ENCODE measurements at regions of chr11 and their contacts with region 1.

Region 1: GRCh38 chr11:119262668-119263351 is 54.1 kb downstream of the MCAM start:
- DNase-seq: no peak
- H3K4me3 Mint-ChIP-seq: no peak overlapping the region
- H3K27ac Mint-ChIP-seq: no peak overlapping the region
- H3K4me1 Mint-ChIP-seq: peaks cover 56% of the 10 kb centered on the region
- H3K27me3 Mint-ChIP-seq: no peaks in the 10 kb centered on the region

Region 2: DNA sequence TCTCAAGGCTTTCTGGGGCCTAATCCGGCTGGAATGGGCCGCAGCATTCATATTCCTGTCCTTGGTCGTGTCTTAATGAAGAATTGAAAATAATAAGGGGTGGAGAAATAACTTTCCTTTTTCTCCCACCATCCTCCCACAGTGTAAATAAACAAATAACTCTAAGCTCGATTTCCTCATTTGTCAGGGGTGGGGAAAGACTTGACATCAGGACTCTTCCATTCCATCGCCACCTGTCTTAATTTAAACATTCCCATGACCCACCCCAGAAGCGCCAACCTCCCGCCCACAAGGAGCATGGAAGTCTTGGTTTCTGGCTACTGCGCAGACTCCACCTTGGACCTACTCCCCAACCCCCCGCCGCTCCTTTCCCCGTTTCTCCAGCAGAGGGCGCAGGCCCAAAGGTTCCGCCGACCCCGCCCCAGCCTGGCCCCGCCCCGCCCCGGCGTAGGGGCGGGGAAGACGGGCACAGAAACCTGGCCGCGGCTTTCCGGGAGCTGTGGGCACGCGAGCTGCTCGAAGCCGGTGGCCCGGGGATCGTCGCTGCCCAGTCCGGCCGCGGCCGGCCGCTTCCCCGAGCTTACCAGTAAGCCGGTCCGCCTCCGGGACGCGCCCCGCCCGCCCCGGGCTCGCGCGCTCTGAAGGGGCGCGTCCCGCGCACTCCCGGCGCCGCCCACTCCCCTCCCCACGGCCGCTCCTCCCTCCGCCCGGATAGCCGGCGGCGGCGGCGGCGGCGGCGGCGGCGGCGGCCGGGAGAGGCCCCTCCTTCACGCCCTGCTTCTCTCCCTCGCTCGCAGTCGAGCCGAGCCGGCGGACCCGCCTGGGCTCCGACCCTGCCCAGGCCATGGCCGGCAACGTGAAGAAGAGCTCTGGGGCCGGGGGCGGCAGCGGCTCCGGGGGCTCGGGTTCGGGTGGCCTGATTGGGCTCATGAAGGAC is 57.0 kb before region 1 on chr11 and contains the start of gene CBL:
- CTCF ChIA-PET with region 1: interaction called, 11 read pairs
- POLR2A ChIA-PET with region 1: interaction called, 5 read pairs
- intact Hi-C with region 1: loop called (anchors 2 kb)
- DNase-seq: peak; percentile 98
- H3K4me3 Mint-ChIP-seq: peak within 1 kb of the TSS; percentile 91
- H3K27ac Mint-ChIP-seq: peak within 1 kb of the TSS; percentile 85
- H3K4me1 Mint-ChIP-seq: peaks cover 25% of the 10 kb centered on the region
- H3K27me3 Mint-ChIP-seq: no peaks in the 10 kb centered on the region
- total RNA-seq, gene CBL: 30.8 to 31.2 TPM

Region 3: GRCh38 chr11:119218141-119218878 is 44.5 kb before region 1 on chr11:
- CTCF ChIA-PET with region 1: no interaction called
- POLR2A ChIA-PET with region 1: no interaction called
- intact Hi-C with region 1: loop called (anchors 2 kb)
- DNase-seq: peak; percentile 22
- H3K4me3 Mint-ChIP-seq: no peak overlapping the region
- H3K27ac Mint-ChIP-seq: peak overlapping the region; percentile 23
- H3K4me1 Mint-ChIP-seq: peaks cover 42% of the 10 kb centered on the region
- H3K27me3 Mint-ChIP-seq: no peaks in the 10 kb centered on the region

Region 4: DNA sequence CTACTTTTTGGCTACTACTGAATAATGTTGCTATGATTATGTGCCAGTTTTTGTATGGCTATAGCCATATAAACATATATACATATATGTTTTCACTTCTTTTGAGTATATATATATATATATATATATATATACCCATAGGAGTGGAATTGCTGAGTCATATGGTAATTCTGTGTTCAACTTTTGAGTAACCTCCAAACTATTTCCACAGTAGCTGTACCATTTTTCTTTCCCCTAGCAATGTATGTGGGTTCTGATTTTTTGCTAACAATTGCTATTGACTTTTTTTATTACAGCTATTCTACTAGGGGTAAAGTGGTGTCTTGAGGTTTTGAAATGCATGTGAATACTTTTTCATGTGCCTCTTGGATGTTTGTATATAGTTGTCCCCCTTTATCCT is 26.3 kb before region 1 on chr11:
- CTCF ChIA-PET with region 1: interaction called, 4 read pairs
- POLR2A ChIA-PET with region 1: interaction called, 5 read pairs
- intact Hi-C with region 1: loop called (anchors 1 kb)
- DNase-seq: no peak
- H3K4me3 Mint-ChIP-seq: no peak overlapping the region
- H3K27ac Mint-ChIP-seq: peak overlapping the region; percentile 44
- H3K4me1 Mint-ChIP-seq: peaks cover 49% of the 10 kb centered on the region
- H3K27me3 Mint-ChIP-seq: no peaks in the 10 kb centered on the region

Region 5: GRCh38 chr11:119249671-119250010 is 13.2 kb before region 1 on chr11:
- CTCF ChIA-PET with region 1: interaction called, 4 read pairs
- POLR2A ChIA-PET with region 1: interaction called, 4 read pairs
- intact Hi-C with region 1: loop called (anchors 1 kb)
- DNase-seq: no peak
- H3K4me3 Mint-ChIP-seq: no peak overlapping the region
- H3K27ac Mint-ChIP-seq: no peak overlapping the region
- H3K4me1 Mint-ChIP-seq: peaks cover 53% of the 10 kb centered on the region
- H3K27me3 Mint-ChIP-seq: no peaks in the 10 kb centered on the region

Region 6: GRCh38 chr11:119284344-119285157 is 21.7 kb after region 1 on chr11:
- CTCF ChIA-PET with region 1: interaction called, 13 read pairs
- POLR2A ChIA-PET with region 1: no interaction called
- intact Hi-C with region 1: loop called (anchors 2 kb)
- DNase-seq: no peak
- H3K4me3 Mint-ChIP-seq: no peak overlapping the region
- H3K27ac Mint-ChIP-seq: no peak overlapping the region
- H3K4me1 Mint-ChIP-seq: peaks cover 13% of the 10 kb centered on the region
- H3K27me3 Mint-ChIP-seq: no peaks in the 10 kb centered on the region

Region 7: DNA sequence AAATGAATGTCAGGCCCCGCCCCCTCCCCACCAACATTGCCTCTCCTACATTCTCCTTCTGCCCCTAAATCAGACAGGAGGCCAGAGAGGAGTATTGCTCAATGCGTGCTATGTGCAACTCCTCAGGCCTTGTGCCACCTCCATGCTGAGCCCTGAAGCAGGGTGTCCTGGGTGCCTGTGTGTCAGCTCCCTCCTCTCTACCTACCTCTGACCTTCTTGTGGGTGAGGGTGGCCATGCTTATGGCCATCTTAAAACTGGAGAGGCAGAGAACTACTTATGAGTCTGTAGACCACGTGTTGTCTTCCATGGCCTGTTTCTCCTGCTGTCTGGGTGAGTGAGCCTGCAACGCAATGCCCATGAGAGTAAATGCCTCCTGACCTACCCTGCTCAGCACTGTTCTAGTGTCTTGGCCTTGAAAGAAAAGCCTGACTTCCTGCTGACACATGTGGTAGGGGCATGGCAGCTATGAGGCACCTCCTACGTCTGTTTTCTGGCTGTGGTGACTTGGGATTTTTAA is 43.6 kb after region 1 on chr11:
- CTCF ChIA-PET with region 1: interaction called, 3 read pairs
- POLR2A ChIA-PET with region 1: no interaction called
- intact Hi-C with region 1: loop called (anchors 2 kb)
- DNase-seq: peak; percentile 57
- H3K4me3 Mint-ChIP-seq: no peak overlapping the region
- H3K27ac Mint-ChIP-seq: peak overlapping the region; percentile 85
- H3K4me1 Mint-ChIP-seq: peaks cover 22% of the 10 kb centered on the region
- H3K27me3 Mint-ChIP-seq: no peaks in the 10 kb centered on the region

Region 8: GRCh38 chr11:119403021-119403420 is 140.2 kb after region 1 on chr11:
- CTCF ChIA-PET with region 1: no interaction called
- POLR2A ChIA-PET with region 1: no interaction called
- intact Hi-C with region 1: no loop called
- DNase-seq: no peak
- H3K4me3 Mint-ChIP-seq: no peak overlapping the region
- H3K27ac Mint-ChIP-seq: no peak overlapping the region
- H3K4me1 Mint-ChIP-seq: no peaks in the 10 kb centered on the region
- H3K27me3 Mint-ChIP-seq: peaks cover 4% of the 10 kb centered on the region